ENCODE measurements at regions of chr10 and their contacts with region 1.

Region 1: GRCh38 chr10:17229969-17230682 is 2.1 kb downstream of the VIM start:
- DNase-seq: peak; percentile 89
- ATAC-seq: peak; percentile 64

Region 2: DNA sequence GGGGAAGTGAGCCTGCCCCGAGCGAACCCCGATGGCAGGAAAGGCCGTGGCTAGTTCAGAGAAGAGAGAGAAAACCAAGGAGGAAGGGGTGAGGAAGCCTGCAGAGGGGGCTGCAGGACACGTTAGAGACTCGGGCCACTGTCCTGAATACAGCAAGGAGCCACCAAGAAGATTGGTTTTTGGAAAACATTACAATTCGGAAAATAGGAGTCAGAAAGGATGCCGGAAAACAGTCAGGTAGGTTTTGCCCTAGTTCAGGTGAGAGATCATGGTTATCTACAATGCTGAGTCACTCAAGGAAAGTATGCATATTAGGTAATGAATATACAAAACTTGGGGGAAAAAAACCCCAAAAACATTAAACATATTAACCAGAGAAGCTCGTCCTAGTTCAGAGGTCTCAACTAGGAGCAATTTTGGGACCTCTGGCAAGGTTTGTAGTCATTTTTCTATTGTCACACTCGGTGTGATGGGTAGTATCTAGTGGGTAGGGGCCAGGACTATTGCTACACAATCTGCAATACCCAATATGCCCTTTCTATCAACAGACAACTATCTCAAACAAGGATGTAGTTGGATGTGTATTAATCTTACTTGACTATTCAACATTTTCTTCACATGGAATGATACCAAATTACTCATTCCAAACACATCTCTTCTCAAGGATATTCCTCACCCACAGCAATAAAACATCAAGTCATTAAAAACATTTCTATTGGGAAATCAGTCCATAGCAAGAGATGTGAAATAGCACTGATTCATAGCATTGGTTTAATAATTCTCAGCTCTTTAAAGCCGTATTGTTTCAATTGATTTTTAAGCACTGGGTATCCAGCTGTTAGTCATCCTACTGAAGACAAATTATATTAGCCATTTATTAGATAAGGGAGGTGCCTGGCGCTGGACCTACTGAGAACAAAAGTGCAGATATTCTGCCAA is 338.5 kb before region 1 on chr10:
- intact Hi-C with region 1: loop called (anchors 5 kb)
- DNase-seq: peak; percentile 72
- ATAC-seq: peak; percentile 98

Measured in left ventricle myocardium superior (tissue), 1 donor.